Activated CD4-positive, alpha-beta T cell treated with anti-CD3 and anti-CD28 coated beads for 36 hours (primary cell): ENCODE measurements at regions of chr6 and their contacts with region 1.

Region 1: GRCh38 chr6:166402582-166403277 is 20.0 kb upstream of the MPC1 start:
- DNase-seq: no peak
- ATAC-seq: no peak
- H3K4me3 Mint-ChIP-seq: no peak overlapping the region
- H3K27ac Mint-ChIP-seq: no peak overlapping the region
- H3K4me1 Mint-ChIP-seq: peaks cover 3% of the 10 kb centered on the region
- H3K27me3 Mint-ChIP-seq: no peaks in the 10 kb centered on the region

Region 2: DNA sequence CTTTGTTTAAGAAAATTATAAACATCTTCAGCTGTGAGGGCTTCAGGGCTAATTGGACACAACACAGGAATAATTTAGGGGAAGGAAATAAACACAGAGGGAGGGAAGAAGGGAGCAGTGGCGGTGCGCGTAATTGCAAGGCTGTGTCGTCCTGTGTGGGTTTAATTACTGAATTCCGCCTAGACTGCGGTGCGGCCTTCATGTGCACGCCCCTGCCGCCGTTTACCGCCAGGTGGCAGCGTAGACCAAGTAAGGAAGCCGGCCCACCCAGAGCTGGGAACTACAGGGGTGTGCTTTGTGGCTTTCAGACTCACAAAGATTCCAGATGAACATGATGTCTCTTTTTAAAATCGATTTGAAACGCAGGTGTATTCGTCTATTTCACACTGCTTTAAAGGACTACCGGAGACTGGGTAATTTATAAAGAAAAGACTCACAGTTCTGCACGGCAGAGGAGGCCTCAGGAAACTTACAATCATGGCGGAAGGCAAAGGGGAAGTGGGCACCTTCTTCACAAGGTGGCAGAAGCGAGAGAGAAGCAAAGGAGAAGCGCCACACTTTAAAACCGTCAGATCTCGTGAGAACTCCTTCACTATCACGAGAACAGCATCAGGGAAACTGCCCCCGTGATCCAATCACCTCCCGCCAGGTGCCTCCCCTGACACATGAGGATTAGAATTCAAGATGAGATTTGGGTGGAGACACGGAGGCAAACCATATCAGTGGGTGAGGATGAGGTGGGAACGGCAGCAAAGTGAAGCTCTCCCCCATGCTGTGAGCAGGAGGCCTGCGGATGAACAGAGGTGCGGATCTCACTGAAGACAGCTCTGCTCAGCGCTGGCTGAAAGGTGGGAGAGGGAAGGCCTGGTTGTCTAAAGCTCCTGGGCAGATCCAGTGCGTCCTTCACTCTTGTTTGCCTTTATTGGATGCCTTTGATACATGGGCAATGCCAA is 517.6 kb before region 1 on chr6:
- CTCF ChIA-PET with region 1: no interaction called
- POLR2A ChIA-PET with region 1: no interaction called
- intact Hi-C with region 1: loop called in 1 of 2 experiments (anchors 10 kb)
- DNase-seq: peak; percentile 85
- ATAC-seq: peak; percentile 97
- H3K4me3 Mint-ChIP-seq: no peak overlapping the region
- H3K27ac Mint-ChIP-seq: no peak overlapping the region
- H3K4me1 Mint-ChIP-seq: peaks cover 7% of the 10 kb centered on the region
- H3K27me3 Mint-ChIP-seq: peaks cover 9% of the 10 kb centered on the region

Region 3: DNA sequence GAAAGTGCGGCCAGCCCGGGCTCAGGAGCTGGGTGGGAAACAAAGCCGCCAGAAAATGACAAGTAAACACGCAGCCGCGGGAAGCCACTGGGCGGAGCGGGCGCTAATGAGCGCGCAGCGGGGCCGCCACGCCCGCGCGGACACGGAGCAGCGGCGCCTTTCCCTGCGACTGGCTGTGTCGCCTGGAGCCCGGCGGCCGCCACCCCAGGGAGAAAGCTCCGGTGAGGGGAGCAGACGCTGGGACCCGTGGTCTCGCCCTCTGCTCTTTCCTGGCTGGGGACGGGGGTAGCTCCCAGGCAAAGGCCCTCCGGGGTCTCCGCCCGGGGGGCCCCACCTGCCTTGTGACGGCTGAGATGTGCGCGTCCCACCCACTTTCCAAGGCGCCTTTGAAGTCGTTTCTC is 149.4 kb before region 1 on chr6:
- CTCF ChIA-PET with region 1: no interaction called
- POLR2A ChIA-PET with region 1: no interaction called
- intact Hi-C with region 1: no loop called
- DNase-seq: peak; percentile 44
- ATAC-seq: no peak
- H3K4me3 Mint-ChIP-seq: peak overlapping the region; percentile 59
- H3K27ac Mint-ChIP-seq: no peak overlapping the region
- H3K4me1 Mint-ChIP-seq: peaks cover 2% of the 10 kb centered on the region
- H3K27me3 Mint-ChIP-seq: peaks cover 42% of the 10 kb centered on the region

Region 4: GRCh38 chr6:166275714-166276166 is 127.0 kb before region 1 on chr6:
- CTCF ChIA-PET with region 1: interaction called, 17 read pairs
- POLR2A ChIA-PET with region 1: no interaction called
- intact Hi-C with region 1: loop called (anchors 1 kb)
- DNase-seq: peak; percentile 87
- ATAC-seq: peak; percentile 91
- H3K4me3 Mint-ChIP-seq: no peak overlapping the region
- H3K27ac Mint-ChIP-seq: no peak overlapping the region
- H3K4me1 Mint-ChIP-seq: peaks cover 7% of the 10 kb centered on the region
- H3K27me3 Mint-ChIP-seq: peaks cover 4% of the 10 kb centered on the region

Region 5: GRCh38 chr6:166281104-166281503 is 121.6 kb before region 1 on chr6:
- CTCF ChIA-PET with region 1: interaction called, 17 read pairs
- POLR2A ChIA-PET with region 1: no interaction called
- intact Hi-C with region 1: no loop called
- DNase-seq: no peak
- ATAC-seq: no peak
- H3K4me3 Mint-ChIP-seq: no peak overlapping the region
- H3K27ac Mint-ChIP-seq: no peak overlapping the region
- H3K4me1 Mint-ChIP-seq: peaks cover 3% of the 10 kb centered on the region
- H3K27me3 Mint-ChIP-seq: peaks cover 1% of the 10 kb centered on the region

Region 6: GRCh38 chr6:166313255-166314070 is 89.3 kb before region 1 on chr6:
- CTCF ChIA-PET with region 1: interaction called, 60 read pairs
- POLR2A ChIA-PET with region 1: no interaction called
- intact Hi-C with region 1: loop called (anchors 1 kb)
- DNase-seq: peak; percentile 83
- ATAC-seq: peak; percentile 97
- H3K4me3 Mint-ChIP-seq: no peak overlapping the region
- H3K27ac Mint-ChIP-seq: no peak overlapping the region
- H3K4me1 Mint-ChIP-seq: peaks cover 3% of the 10 kb centered on the region
- H3K27me3 Mint-ChIP-seq: peaks cover 16% of the 10 kb centered on the region